HepG2 (cell line): ENCODE measurements at regions of chr20 and their contacts with region 1.

Region 1: GRCh38 chr20:347640-348484 is 951 bp downstream of the NRSN2 start:
- DNase-seq: peak; percentile 99
- ATAC-seq: peak; percentile 85
- H3K4me3 ChIP-seq: peak overlapping the region; percentile 63 to 88 (median 87)
- H3K27ac ChIP-seq: peak overlapping the region; percentile 81
- H3K4me1 ChIP-seq: peaks cover 34% of the 10 kb centered on the region
- H3K27me3 ChIP-seq: no peaks in the 10 kb centered on the region
- CTCF ChIP-seq: peak; percentile 27
- EP300 ChIP-seq: peak in 1 of 2 experiments; percentile 86; a peak in 3 of 4 replicates
- POLR2A ChIP-seq: peak; percentile 80 to 85
- RAD21 ChIP-seq: peak; percentile 65

Region 2: GRCh38 chr20:324177-325044 is 23.5 kb before region 1 on chr20:
- CTCF ChIA-PET with region 1: no interaction called
- POLR2A ChIA-PET with region 1: interaction called, 107 read pairs
- in situ Hi-C with region 1: no loop called
- intact Hi-C with region 1: no loop called
- DNase-seq: peak; percentile 89
- ATAC-seq: peak; percentile 73
- H3K4me3 ChIP-seq: peak overlapping the region; percentile 70 to 96 (median 84)
- H3K27ac ChIP-seq: peak overlapping the region; percentile 87
- H3K4me1 ChIP-seq: peaks cover 31% of the 10 kb centered on the region
- H3K27me3 ChIP-seq: no peaks in the 10 kb centered on the region; a peak in 1 of 5 replicates
- CTCF ChIP-seq: peak; percentile 51
- EP300 ChIP-seq: peak; percentile 59 to 71; a peak in 3 of 4 replicates
- POLR2A ChIP-seq: peak in 1 of 2 experiments; percentile 86; a peak in 2 of 4 replicates
- RAD21 ChIP-seq: peak; percentile 71

Region 3: DNA sequence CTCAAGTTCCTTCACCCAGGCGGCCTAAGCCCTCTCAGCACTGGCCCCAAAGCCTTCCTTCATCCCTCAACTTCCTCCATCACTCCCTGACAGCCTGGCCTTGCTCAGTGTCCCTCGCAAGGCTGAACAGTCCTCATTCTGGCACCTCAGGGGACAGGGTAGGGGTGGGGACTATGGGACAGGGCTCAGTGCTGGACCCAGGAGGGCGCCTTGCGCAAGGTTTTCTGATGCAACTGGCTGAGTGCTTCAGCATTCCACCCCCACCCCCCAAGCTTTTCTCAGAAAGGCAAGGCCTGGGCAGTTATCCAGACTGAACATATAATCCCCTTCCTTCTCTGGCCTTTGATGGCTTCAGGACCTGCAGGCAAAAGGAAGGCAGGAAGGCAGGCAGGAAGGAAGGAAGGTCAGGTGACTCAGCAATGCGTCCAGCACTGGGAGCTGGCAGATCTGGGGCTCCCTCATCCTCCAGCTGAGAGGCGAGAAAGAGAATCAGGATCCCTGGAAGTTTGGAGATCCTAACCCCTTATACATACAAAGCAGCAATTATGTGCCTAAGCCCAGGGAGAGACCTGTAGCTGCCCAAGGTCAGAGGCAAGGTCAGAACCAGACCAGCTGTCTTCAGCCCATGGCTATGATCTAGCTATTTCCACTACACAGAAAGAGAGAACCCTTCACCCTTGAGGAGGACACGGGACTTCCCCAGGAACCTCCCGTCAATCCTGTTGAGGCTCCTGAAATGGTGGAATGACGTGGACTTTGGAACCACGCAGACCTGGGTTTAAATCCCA is 24.1 kb after region 1 on chr20:
- CTCF ChIA-PET with region 1: no interaction called
- POLR2A ChIA-PET with region 1: interaction called, 1,587 read pairs
- in situ Hi-C with region 1: no loop called
- intact Hi-C with region 1: no loop called
- DNase-seq: peak; percentile 99
- ATAC-seq: peak; percentile 88
- H3K4me3 ChIP-seq: peak overlapping the region; percentile 1 to 58 (median 5); a peak in 5 of 6 replicates
- H3K27ac ChIP-seq: peak overlapping the region; percentile 88
- H3K4me1 ChIP-seq: peaks cover 69% of the 10 kb centered on the region
- H3K27me3 ChIP-seq: no peaks in the 10 kb centered on the region
- CTCF ChIP-seq: peak; percentile 66
- EP300 ChIP-seq: peak; percentile 98 to 99
- POLR2A ChIP-seq: peak; percentile 64 to 69
- RAD21 ChIP-seq: peak; percentile 81

Region 4: GRCh38 chr20:401682-402495 is 54.0 kb after region 1 on chr20:
- CTCF ChIA-PET with region 1: no interaction called
- POLR2A ChIA-PET with region 1: interaction called, 1,587 read pairs
- in situ Hi-C with region 1: no loop called
- intact Hi-C with region 1: no loop called
- DNase-seq: peak; percentile 100
- ATAC-seq: peak; percentile 75
- H3K4me3 ChIP-seq: peak overlapping the region in 2 of 3 experiments; percentile 27 to 57; a peak in 2 of 6 replicates
- H3K27ac ChIP-seq: peak overlapping the region; percentile 99
- H3K4me1 ChIP-seq: peaks cover 97% of the 10 kb centered on the region
- H3K27me3 ChIP-seq: no peaks in the 10 kb centered on the region; a peak in 1 of 5 replicates
- CTCF ChIP-seq: no peak
- EP300 ChIP-seq: peak; percentile 97 to 99
- POLR2A ChIP-seq: peak; percentile 78 to 85
- RAD21 ChIP-seq: peak; percentile 36; the same call in 1 of the 2 replicates

Region 5: DNA sequence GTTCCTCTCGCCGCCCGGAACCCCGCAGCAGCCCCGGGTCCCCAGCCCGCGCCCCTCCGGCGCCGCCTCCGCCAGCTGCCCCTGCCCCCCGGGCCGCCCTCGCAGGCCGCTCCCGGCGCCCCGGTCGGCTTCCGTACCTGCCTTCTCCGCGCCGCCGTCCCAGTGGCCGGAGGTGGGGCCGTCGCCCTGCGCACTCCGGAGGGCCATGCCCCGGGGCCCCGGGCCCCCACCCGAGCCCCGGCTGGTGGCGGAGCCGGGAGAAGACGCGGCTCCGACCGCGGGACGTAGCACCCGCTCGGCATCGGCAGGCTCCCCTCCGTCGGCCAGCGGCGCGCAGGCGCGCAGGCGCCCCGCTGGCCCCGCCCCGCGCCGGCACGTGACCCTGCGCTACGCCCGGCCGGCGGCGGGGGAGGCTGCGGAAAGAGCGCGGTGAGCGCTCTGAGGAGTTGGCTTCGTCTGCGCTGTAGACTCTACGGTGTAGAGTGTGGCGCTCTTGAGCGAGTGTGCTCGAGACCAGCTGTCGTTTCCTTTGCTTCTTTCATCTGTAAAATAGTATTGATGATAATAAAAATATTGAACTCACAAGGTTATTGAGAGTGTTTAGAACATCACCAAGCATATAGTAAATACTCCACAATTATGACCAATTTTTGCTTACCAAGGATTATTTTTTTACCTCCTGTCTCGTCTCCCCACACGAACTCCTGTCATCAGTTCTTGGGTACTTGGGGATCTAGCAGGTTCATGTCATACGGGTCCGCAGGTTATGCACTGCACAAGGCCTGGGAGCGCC is 114.5 kb after region 1 on chr20 and contains the start of gene TBC1D20:
- CTCF ChIA-PET with region 1: no interaction called
- POLR2A ChIA-PET with region 1: interaction called, 13 read pairs
- in situ Hi-C with region 1: no loop called
- intact Hi-C with region 1: no loop called
- DNase-seq: peak; percentile 87
- ATAC-seq: peak; percentile 95
- H3K4me3 ChIP-seq: peak within 1 kb of the TSS; percentile 81 to 96 (median 91)
- H3K27ac ChIP-seq: peak within 1 kb of the TSS; percentile 75
- H3K4me1 ChIP-seq: peaks cover 41% of the 10 kb centered on the region
- H3K27me3 ChIP-seq: no peaks in the 10 kb centered on the region; a peak in 2 of 5 replicates
- CTCF ChIP-seq: peak; percentile 74
- EP300 ChIP-seq: peak in 1 of 2 experiments; percentile 61; a peak in 1 of 4 replicates
- POLR2A ChIP-seq: peak; percentile 76 to 93
- RAD21 ChIP-seq: peak; percentile 37
- total RNA-seq, gene TBC1D20: 36.6 and 45.9 TPM in 2 replicates

Region 6: GRCh38 chr20:872855-873521 is 525.1 kb after region 1 on chr20:
- CTCF ChIA-PET with region 1: no interaction called
- POLR2A ChIA-PET with region 1: no interaction called
- in situ Hi-C with region 1: no loop called
- intact Hi-C with region 1: no loop called
- DNase-seq: no peak
- ATAC-seq: peak; percentile 22; the same call in 2 of the 3 replicates
- H3K4me3 ChIP-seq: no peak overlapping the region
- H3K27ac ChIP-seq: no peak overlapping the region
- H3K4me1 ChIP-seq: no peaks in the 10 kb centered on the region
- H3K27me3 ChIP-seq: no peaks in the 10 kb centered on the region
- CTCF ChIP-seq: peak; percentile 26
- EP300 ChIP-seq: no peak
- POLR2A ChIP-seq: no peak
- RAD21 ChIP-seq: no peak